Calu3 (cell line): ENCODE measurements at regions of chr2 and their contacts with region 1.

Region 1: GRCh38 chr2:57107353-57107752 is 923.6 kb downstream of the CCDC85A start:
- DNase-seq: no peak
- H3K4me3 Mint-ChIP-seq: no peak overlapping the region
- H3K27ac Mint-ChIP-seq: peak overlapping the region; percentile 52
- H3K4me1 Mint-ChIP-seq: peaks cover 7% of the 10 kb centered on the region
- H3K27me3 Mint-ChIP-seq: no peaks in the 10 kb centered on the region
- CTCF ChIP-seq: no peak

Region 2: DNA sequence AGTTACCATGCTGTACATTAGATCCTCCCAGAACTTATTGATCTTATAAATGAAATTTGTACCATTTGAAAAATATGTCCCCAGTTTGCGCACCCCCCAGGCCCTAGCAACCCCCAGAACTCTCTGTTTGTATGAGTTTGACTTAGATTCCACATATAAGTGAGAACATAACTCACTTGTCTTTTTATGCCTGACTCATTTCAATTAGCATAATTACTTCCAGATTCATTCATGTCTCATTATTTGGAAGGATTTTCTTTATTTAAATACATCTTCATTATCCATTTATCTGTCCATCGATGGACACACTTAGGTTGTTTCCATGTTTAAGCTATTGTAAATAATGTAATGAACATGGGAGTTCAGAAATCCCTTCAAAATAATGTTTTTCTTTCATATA is 217.6 kb before region 1 on chr2:
- CTCF ChIA-PET with region 1: no interaction called
- intact Hi-C with region 1: no loop called
- DNase-seq: no peak
- H3K4me3 Mint-ChIP-seq: no peak overlapping the region
- H3K27ac Mint-ChIP-seq: no peak overlapping the region
- H3K4me1 Mint-ChIP-seq: no peaks in the 10 kb centered on the region
- H3K27me3 Mint-ChIP-seq: no peaks in the 10 kb centered on the region
- CTCF ChIP-seq: no peak

Region 3: GRCh38 chr2:56940054-56940453 is 167.3 kb before region 1 on chr2:
- CTCF ChIA-PET with region 1: no interaction called
- intact Hi-C with region 1: no loop called
- DNase-seq: no peak
- H3K4me3 Mint-ChIP-seq: no peak overlapping the region
- H3K27ac Mint-ChIP-seq: no peak overlapping the region
- H3K4me1 Mint-ChIP-seq: no peaks in the 10 kb centered on the region
- H3K27me3 Mint-ChIP-seq: no peaks in the 10 kb centered on the region
- CTCF ChIP-seq: no peak

Region 4: DNA sequence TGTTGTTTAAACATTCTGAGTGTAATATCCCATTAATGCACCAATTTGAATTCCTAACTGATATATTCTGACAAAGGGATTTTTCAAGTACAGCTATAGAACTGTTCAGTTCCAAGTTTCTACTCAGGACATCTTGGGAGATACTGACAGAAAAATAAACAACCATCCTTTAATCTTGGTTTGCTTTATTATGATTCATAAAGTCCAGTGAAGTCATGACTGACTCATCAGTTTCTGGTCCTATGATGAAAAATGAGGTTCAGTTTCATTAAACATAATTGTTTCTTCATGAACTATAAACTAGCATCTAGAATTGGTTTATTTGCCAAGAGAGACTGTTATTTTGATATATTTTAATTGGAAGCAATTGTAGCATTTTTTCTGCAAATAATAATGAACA is 27.3 kb before region 1 on chr2:
- CTCF ChIA-PET with region 1: no interaction called
- intact Hi-C with region 1: loop called (anchors 2 kb)
- DNase-seq: no peak
- H3K4me3 Mint-ChIP-seq: no peak overlapping the region
- H3K27ac Mint-ChIP-seq: no peak overlapping the region
- H3K4me1 Mint-ChIP-seq: peaks cover 23% of the 10 kb centered on the region
- H3K27me3 Mint-ChIP-seq: no peaks in the 10 kb centered on the region
- CTCF ChIP-seq: no peak